Activated CD4-positive, alpha-beta memory T cell treated with anti-CD3 and anti-CD28 coated beads for 36 hours (primary cell): ENCODE measurements at regions of chrX and their contacts with region 1.

Region 1: DNA sequence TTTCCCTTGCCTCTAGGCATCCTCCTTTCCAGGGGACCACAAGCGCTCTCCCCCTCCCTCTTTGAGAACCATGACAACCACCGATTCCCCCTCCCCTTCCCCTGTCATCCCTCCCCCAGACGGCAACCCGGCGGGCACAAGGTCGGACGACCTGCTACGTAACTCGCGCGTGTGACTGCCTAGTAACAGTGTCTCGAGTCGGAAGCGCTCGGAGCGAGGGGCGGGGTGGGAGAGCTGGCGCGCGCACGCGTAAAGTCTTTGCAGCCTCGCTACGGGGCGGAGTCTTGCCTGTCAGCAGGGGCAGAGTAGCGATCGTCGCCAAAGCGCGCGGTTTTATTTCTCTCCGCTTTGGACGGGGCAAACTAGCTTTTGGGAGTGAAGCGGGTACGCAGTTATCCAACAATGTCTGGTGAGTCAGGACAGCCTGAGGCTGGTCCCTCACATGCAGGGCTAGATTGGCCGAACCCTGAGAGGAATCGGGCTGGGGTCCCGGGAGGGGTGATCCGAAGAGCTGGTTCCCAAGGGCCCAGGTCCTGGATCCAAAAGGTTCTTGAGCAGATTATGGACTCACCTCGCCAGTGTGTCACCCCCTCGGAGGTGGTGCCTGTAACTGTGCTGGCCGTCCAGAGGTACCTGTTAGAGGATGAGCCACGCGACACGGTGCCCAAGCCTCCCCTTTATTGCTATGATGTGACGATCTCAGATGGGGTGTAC is at the start of gene RADX:
- DNase-seq: peak; percentile 92
- H3K4me3 Mint-ChIP-seq: peak within 1 kb of the TSS; percentile 84
- H3K27ac Mint-ChIP-seq: peak within 1 kb of the TSS; percentile 84
- H3K4me1 Mint-ChIP-seq: peaks cover 30% of the 10 kb centered on the region
- H3K27me3 Mint-ChIP-seq: no peaks in the 10 kb centered on the region
- total RNA-seq, gene RADX: 11.8 to 12.7 TPM

Region 2: GRCh38 chrX:106588801-106589200 is 23.0 kb before region 1 on chrX:
- CTCF ChIA-PET with region 1: interaction called, 5 read pairs
- POLR2A ChIA-PET with region 1: interaction called, 4 read pairs
- intact Hi-C with region 1: loop called (anchors 2 kb)
- DNase-seq: no peak
- H3K4me3 Mint-ChIP-seq: no peak overlapping the region
- H3K27ac Mint-ChIP-seq: no peak overlapping the region
- H3K4me1 Mint-ChIP-seq: peaks cover 4% of the 10 kb centered on the region
- H3K27me3 Mint-ChIP-seq: no peaks in the 10 kb centered on the region

Region 3: DNA sequence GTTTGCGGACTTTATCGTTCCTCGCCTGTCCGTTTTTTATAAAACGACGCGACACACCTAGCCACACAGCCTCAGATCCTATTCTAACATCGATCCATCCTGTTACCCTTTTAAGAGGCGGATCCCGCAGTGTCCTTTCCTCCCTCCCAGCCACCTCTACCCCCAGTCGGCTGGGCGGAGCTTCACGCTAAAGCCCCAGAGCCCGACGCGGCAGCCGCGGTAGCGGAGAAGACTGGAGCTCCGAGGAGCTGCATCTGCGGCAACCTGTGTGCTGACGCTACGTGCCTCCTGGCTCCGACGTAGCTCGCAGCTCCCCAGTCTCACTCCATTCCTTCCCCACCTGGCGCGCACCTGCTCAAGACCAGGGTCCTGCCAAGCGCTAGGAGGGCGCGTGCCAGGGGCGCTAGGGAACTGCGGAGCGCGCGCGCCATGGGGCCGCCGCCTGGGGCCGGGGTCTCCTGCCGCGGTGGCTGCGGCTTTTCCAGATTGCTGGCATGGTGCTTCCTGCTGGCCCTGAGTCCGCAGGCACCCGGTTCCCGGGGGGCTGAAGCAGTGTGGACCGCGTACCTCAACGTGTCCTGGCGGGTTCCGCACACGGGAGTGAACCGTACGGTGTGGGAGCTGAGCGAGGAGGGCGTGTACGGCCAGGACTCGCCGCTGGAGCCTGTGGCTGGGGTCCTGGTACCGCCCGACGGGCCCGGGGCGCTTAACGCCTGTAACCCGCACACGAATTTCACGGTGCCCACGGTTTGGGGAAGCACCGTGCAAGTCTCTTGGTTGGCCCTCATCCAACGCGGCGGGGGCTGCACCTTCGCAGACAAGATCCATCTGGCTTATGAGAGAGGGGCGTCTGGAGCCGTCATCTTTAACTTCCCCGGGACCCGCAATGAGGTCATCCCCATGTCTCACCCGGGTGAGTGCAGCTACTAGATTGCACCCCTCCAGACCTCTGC is 114.9 kb after region 1 on chrX and contains the start of gene RNF128:
- CTCF ChIA-PET with region 1: no interaction called
- POLR2A ChIA-PET with region 1: no interaction called
- intact Hi-C with region 1: loop called (anchors 5 kb)
- DNase-seq: peak; percentile 43
- H3K4me3 Mint-ChIP-seq: peak within 1 kb of the TSS; percentile 69
- H3K27ac Mint-ChIP-seq: no peak within 1 kb of the TSS
- H3K4me1 Mint-ChIP-seq: peaks cover 5% of the 10 kb centered on the region
- H3K27me3 Mint-ChIP-seq: peaks cover 18% of the 10 kb centered on the region
- total RNA-seq, gene RNF128: not detected

Region 4: DNA sequence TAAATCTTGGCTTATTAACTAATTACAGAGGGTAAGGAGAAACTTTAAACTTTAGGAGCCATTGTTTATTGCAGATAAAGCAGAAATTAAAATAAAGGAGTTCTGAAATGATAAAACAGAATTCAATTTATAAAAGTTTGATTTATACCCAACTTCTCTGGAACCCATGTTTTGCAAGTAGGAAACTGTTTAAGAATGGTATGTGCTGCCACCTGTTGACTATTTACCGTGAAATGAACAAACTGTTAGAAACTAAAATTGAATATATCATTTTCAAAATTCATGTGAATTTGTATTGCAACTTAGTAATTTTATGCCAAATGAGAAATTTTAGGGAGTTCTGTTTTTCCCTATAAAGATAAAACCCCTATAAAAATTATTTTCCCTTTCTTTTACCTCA is 179.7 kb after region 1 on chrX:
- CTCF ChIA-PET with region 1: no interaction called
- POLR2A ChIA-PET with region 1: no interaction called
- intact Hi-C with region 1: loop called (anchors 5 kb)
- DNase-seq: no peak
- H3K4me3 Mint-ChIP-seq: no peak overlapping the region
- H3K27ac Mint-ChIP-seq: no peak overlapping the region
- H3K4me1 Mint-ChIP-seq: no peaks in the 10 kb centered on the region
- H3K27me3 Mint-ChIP-seq: no peaks in the 10 kb centered on the region

Region 5: GRCh38 chrX:106802387-106803275 is 190.8 kb after region 1 on chrX and contains the start of gene TBC1D8B:
- CTCF ChIA-PET with region 1: no interaction called
- POLR2A ChIA-PET with region 1: no interaction called
- intact Hi-C with region 1: loop called (anchors 5 kb)
- DNase-seq: peak; percentile 42
- H3K4me3 Mint-ChIP-seq: peak within 1 kb of the TSS; percentile 89
- H3K27ac Mint-ChIP-seq: no peak within 1 kb of the TSS
- H3K4me1 Mint-ChIP-seq: peaks cover 9% of the 10 kb centered on the region
- H3K27me3 Mint-ChIP-seq: peaks cover 19% of the 10 kb centered on the region
- total RNA-seq, gene TBC1D8B: 1.4 to 2.2 TPM